ENCODE measurements at regions of chr1 and their contacts with region 1.

Region 1: GRCh38 chr1:31705080-31705866 is 1.5 kb upstream of the COL16A1 start:
- DNase-seq: peak; percentile 87
- H3K4me3 Mint-ChIP-seq: peak overlapping the region; percentile 16
- H3K27ac Mint-ChIP-seq: no peak overlapping the region
- H3K4me1 Mint-ChIP-seq: peaks cover 28% of the 10 kb centered on the region
- H3K27me3 Mint-ChIP-seq: peaks cover 37% of the 10 kb centered on the region

Region 2: DNA sequence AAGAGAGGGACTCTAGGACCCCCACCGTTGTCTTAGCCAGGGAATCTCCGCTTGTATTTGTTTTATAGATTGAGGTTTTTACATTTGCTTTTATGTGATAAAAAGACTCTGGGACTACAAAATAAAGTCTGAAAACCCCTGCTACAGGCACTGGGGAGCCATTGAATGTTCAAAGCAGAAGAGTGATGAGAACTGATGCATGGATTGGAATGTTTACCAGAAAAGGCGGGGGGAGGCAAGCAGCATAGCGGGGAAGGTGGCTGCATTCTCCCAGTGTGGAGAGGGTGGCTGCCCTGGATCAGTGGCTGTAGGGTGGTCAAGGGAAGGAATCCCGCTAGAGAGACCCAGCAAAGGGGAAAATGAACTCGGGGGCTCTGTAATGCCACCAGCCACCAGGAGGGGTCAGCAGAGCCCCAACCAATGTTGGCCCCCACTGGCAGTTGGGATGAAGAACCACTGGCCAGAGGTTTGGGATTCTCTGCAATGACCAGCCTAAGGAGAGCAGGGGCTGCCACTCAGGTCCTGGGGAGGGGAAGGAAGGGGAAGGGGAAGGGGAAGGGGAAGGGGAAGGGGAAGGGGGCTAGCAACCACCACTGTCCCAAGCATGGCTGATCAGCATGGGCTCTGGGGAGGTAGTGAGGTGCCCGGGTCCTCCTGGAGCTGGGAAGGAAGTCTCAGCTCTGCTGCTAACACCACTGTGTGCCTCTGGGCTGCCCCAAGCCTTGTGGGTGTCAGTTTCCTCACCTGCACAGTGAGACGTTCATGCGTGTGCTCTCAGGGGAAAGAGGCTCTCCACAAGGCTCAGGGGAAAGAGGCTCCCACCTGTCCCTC is 41.4 kb before region 1 on chr1:
- CTCF ChIA-PET with region 1: interaction called, 12 read pairs
- intact Hi-C with region 1: loop called (anchors 1 kb)
- DNase-seq: peak; percentile 63
- H3K4me3 Mint-ChIP-seq: no peak overlapping the region
- H3K27ac Mint-ChIP-seq: no peak overlapping the region
- H3K4me1 Mint-ChIP-seq: no peaks in the 10 kb centered on the region
- H3K27me3 Mint-ChIP-seq: no peaks in the 10 kb centered on the region

Region 3: GRCh38 chr1:31694069-31694963 is 11.0 kb before region 1 on chr1:
- CTCF ChIA-PET with region 1: no interaction called
- intact Hi-C with region 1: no loop called
- DNase-seq: no peak
- H3K4me3 Mint-ChIP-seq: no peak overlapping the region
- H3K27ac Mint-ChIP-seq: no peak overlapping the region
- H3K4me1 Mint-ChIP-seq: peaks cover 7% of the 10 kb centered on the region
- H3K27me3 Mint-ChIP-seq: no peaks in the 10 kb centered on the region

Region 4: DNA sequence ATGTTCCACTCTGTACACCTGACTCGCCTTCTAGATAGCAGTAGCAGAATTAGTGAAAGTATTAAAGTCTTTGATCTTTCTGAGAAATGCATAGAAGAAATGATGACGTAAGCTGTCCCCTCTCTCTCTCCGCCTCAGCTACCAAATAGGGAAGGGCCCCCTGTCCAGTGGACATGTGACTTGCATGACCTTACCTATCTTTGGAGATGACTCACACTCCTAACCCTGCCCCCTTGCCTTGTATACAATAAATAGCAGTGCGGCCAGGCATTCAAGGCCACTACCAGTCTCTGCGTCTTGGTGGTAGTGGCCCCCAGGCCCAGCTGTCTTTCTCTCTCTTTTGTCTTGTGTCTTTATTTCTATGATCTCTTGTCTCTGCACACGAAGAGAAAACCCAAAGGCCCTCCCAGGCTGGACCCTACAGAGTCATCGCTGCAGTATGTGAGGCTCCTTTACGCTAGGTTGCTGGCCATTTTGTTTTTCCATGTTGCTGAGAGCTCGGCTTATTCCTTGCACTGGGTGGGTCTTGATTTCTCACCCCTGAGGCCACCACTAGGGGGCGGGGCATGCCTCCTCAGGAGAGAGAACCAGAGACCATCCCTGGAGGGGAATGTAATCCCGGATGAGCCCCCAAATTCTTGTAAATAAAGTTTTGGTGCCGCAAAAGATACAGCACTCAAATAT is 743.6 kb after region 1 on chr1:
- CTCF ChIA-PET with region 1: no interaction called
- intact Hi-C with region 1: no loop called
- DNase-seq: no peak
- H3K4me3 Mint-ChIP-seq: no peak overlapping the region
- H3K27ac Mint-ChIP-seq: no peak overlapping the region
- H3K4me1 Mint-ChIP-seq: no peaks in the 10 kb centered on the region
- H3K27me3 Mint-ChIP-seq: peaks cover 19% of the 10 kb centered on the region